Left ventricle myocardium superior (tissue), 1 donor: ENCODE measurements at regions of chr13 and their contacts with region 1.

Region 1: DNA sequence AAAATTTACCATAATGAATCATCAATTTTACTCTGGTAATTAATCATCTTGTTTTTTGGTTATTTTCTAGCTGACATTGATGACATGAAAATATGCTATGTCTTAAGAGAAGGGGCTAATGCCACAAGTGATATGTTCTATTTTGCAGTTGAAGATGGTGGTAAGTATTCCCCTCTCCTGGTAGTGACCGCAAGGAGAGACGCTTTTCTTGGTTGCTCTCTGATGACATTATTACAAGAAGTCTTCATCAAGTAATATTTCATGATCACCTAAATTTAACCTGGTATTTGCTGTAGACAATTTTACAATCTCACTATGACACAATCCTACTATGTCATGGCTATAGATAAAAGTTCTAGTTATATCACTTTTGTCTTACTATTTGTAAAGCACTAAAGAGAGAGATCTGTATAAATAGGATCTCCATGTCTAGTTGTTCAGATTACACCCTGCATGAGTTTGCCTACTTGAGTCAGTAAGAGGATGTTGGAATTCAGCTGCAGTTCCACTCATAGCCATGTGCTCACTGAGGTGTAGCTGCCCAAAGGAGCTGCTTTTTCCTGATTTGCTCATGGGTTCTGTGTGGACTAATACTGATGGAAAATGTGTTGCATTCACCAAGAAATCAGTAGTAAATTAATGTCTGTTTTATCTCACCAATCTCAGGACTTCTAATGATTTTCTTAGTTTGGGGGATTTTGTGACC is 10.9 kb downstream of the FREM2 start:
- DNase-seq: no peak
- ATAC-seq: no peak

Region 2: GRCh38 chr13:38763439-38764381 is 65.9 kb after region 1 on chr13:
- intact Hi-C with region 1: loop called (anchors 10 kb)
- DNase-seq: no peak
- ATAC-seq: no peak

Region 3: GRCh38 chr13:38819053-38819452 is 121.3 kb after region 1 on chr13:
- intact Hi-C with region 1: no loop called
- DNase-seq: no peak
- ATAC-seq: no peak

Region 4: GRCh38 chr13:39023790-39024189 is 326.0 kb after region 1 on chr13:
- intact Hi-C with region 1: no loop called
- DNase-seq: no peak
- ATAC-seq: no peak